MCF 10A (cell line): ENCODE measurements at regions of chr19 and their contacts with region 1.

Region 1: GRCh38 chr19:13748169-13748828 is 16.0 kb upstream of the MRI1 start:
- DNase-seq: peak; percentile 27
- H3K4me3 Mint-ChIP-seq: peak overlapping the region; percentile 89
- H3K27ac Mint-ChIP-seq: peak overlapping the region; percentile 90
- H3K4me1 Mint-ChIP-seq: peaks cover 12% of the 10 kb centered on the region
- H3K27me3 Mint-ChIP-seq: no peaks in the 10 kb centered on the region
- CTCF ChIP-seq: no peak

Region 2: DNA sequence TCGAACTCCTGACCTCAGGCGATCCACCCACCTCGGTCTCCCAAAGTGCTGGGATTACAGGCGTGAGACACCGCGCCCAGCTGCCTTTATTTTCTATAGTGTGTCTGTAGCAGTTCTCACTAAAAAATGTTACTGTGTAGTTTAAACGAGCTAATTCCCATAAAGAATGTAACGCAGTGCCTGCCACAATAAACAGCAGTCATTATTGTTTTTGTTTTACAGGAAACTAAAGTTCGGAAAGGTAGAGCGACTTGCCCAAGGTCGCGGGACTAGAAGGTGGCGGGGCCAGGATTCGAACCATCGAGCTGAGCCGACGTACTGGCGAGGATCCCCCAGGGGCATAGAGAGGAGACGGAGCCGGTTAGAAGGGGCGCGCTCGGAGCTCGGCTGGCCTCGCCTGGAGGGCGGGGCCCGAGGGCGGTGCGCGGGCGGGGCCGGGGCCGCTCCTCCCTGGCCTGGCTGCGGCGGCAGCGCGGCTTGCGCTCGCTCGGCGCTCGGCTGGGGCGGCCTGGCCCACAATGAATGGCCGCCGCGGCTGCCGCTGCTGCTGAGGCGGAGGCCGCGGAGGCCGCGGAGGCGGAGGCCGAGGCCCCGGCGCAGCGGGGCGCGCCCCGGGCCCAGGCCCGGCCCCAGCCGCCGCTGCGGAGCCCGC is 630.4 kb before region 1 on chr19 and contains the start of gene NACC1:
- CTCF ChIA-PET with region 1: no interaction called
- POLR2A ChIA-PET with region 1: no interaction called
- intact Hi-C with region 1: loop called (anchors 5 kb)
- DNase-seq: peak; percentile 90
- H3K4me3 Mint-ChIP-seq: peak within 1 kb of the TSS; percentile 98
- H3K27ac Mint-ChIP-seq: peak within 1 kb of the TSS; percentile 98
- H3K4me1 Mint-ChIP-seq: peaks cover 30% of the 10 kb centered on the region
- H3K27me3 Mint-ChIP-seq: no peaks in the 10 kb centered on the region
- CTCF ChIP-seq: no peak
- total RNA-seq, gene NACC1: 55.9 and 67.3 TPM in 2 replicates

Region 3: GRCh38 chr19:13731147-13731964 is 16.9 kb before region 1 on chr19:
- CTCF ChIA-PET with region 1: interaction called, 5 read pairs
- POLR2A ChIA-PET with region 1: interaction called, 47 read pairs
- intact Hi-C with region 1: no loop called
- DNase-seq: peak; percentile 95
- H3K4me3 Mint-ChIP-seq: peak overlapping the region; percentile 79
- H3K27ac Mint-ChIP-seq: peak overlapping the region; percentile 99
- H3K4me1 Mint-ChIP-seq: peaks cover 18% of the 10 kb centered on the region
- H3K27me3 Mint-ChIP-seq: no peaks in the 10 kb centered on the region
- CTCF ChIP-seq: no peak

Region 4: GRCh38 chr19:13764101-13764807 is 16.0 kb after region 1 on chr19 and contains the start of gene MRI1:
- CTCF ChIA-PET with region 1: interaction called, 3 read pairs
- POLR2A ChIA-PET with region 1: interaction called, 44 read pairs
- intact Hi-C with region 1: no loop called
- DNase-seq: peak; percentile 69
- H3K4me3 Mint-ChIP-seq: peak within 1 kb of the TSS; percentile 81
- H3K27ac Mint-ChIP-seq: peak within 1 kb of the TSS; percentile 81
- H3K4me1 Mint-ChIP-seq: peaks cover 17% of the 10 kb centered on the region
- H3K27me3 Mint-ChIP-seq: no peaks in the 10 kb centered on the region
- CTCF ChIP-seq: no peak
- total RNA-seq, gene MRI1: 24.8 and 27.0 TPM in 2 replicates

Region 5: GRCh38 chr19:13804830-13805683 is 56.8 kb after region 1 on chr19:
- CTCF ChIA-PET with region 1: no interaction called
- POLR2A ChIA-PET with region 1: no interaction called
- intact Hi-C with region 1: no loop called
- DNase-seq: no peak
- H3K4me3 Mint-ChIP-seq: no peak overlapping the region
- H3K27ac Mint-ChIP-seq: no peak overlapping the region
- H3K4me1 Mint-ChIP-seq: no peaks in the 10 kb centered on the region
- H3K27me3 Mint-ChIP-seq: no peaks in the 10 kb centered on the region
- CTCF ChIP-seq: no peak

Region 6: DNA sequence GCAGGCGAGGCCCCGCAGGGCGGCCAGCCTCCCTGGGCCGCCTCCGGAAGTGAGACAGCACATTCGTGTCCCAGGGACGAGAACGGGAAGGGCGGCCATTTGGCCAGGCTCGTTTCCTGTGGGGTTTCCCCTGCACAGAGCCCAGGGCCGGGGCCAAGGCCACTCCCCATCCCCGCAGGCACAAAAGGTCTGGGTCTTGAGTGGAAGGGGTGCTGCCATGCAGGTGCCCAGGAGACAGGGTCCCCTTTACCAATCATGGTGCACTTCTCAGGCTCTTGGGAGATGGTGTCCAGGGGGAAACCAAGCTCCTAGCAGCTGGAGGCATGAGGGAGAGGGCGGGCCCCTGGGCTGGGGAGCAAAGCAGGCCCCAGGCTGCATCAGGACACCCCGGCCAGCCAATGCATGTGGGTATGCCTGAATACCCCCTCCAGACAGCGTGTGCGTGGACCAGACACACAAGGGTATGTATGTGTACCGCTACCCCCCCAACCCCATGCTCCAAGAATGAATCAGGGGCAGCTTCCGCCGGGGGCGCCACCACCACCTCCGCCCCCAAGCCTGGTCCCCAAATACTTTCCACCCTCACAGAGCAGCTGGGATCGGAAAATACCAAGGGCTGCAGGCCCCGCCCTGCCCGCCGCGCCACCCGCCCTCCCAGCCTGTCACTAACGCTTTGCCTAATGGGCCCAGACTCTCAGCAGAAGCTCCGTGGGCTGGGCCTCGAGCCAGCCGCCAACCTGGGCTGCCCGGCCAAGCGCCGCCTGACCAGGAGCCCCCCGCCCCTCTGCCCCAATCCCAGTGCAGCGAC is 91.0 kb after region 1 on chr19:
- CTCF ChIA-PET with region 1: no interaction called
- POLR2A ChIA-PET with region 1: interaction called, 12 read pairs
- intact Hi-C with region 1: no loop called
- DNase-seq: peak; percentile 94
- H3K4me3 Mint-ChIP-seq: peak overlapping the region; percentile 96
- H3K27ac Mint-ChIP-seq: peak overlapping the region; percentile 95
- H3K4me1 Mint-ChIP-seq: peaks cover 16% of the 10 kb centered on the region
- H3K27me3 Mint-ChIP-seq: no peaks in the 10 kb centered on the region
- CTCF ChIP-seq: no peak

Region 7: DNA sequence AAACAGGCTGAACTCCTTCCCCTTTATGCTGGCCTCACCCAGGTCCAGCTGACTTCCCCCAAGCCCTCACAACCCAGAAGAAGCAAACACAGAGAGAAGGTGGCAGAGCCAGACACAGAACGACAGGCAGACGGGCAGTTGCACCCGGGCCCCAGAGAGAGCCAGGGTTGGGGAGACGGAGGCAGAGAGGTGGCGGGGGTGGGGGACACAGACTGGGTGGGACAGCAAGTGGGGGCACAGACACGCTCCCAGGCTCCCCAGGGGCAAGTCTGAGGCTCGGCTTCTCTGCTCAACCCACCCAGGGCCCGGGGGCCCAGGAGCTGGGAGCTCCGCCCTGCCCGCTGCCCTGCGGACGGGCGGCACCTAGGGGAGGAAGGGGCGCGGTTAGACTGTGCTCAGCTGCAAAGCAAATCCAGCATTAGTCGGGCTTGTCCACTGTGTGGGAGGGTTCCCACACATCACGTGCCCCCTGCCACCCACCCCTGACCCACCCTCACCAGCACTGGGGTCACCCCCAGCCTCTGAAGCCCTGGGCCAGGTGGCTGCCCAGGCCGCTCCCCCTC is 419.4 kb after region 1 on chr19:
- CTCF ChIA-PET with region 1: no interaction called
- POLR2A ChIA-PET with region 1: no interaction called
- intact Hi-C with region 1: no loop called
- DNase-seq: no peak
- H3K4me3 Mint-ChIP-seq: no peak overlapping the region
- H3K27ac Mint-ChIP-seq: no peak overlapping the region
- H3K4me1 Mint-ChIP-seq: no peaks in the 10 kb centered on the region
- H3K27me3 Mint-ChIP-seq: no peaks in the 10 kb centered on the region
- CTCF ChIP-seq: no peak